Right ventricle myocardium superior (tissue), 1 donor: ENCODE measurements at regions of chr13 and their contacts with region 1.

Region 1: DNA sequence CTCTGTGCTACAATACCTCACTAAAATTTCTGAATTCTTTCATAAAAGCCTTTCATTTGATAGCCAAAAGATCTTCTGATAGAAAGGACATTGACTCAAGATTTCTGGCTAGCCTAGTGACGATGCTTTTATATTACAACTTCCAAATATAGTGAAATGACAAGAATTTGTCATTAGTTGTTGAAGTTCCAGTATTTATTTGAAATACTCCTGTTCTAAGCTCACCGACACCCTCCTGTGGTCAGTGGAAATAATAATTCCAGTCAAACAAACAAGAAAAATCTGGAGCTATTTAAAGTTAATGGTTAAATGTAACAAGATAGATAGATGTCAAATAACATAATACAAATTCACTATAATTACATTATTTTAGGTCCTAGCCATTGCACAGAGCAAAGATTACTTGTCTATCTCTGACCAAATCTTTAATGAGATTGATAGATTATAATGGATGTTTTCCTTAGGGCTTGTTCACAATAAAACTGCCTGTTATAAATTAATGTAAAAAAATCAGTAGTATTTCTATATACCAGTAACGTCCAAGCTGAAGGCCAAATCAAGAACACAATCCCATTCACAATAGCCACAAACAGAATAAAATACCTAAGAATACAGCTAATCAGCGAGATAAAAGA is 195.5 kb downstream of the RGCC start:
- DNase-seq: no peak
- ATAC-seq: peak; percentile 33

Region 2: DNA sequence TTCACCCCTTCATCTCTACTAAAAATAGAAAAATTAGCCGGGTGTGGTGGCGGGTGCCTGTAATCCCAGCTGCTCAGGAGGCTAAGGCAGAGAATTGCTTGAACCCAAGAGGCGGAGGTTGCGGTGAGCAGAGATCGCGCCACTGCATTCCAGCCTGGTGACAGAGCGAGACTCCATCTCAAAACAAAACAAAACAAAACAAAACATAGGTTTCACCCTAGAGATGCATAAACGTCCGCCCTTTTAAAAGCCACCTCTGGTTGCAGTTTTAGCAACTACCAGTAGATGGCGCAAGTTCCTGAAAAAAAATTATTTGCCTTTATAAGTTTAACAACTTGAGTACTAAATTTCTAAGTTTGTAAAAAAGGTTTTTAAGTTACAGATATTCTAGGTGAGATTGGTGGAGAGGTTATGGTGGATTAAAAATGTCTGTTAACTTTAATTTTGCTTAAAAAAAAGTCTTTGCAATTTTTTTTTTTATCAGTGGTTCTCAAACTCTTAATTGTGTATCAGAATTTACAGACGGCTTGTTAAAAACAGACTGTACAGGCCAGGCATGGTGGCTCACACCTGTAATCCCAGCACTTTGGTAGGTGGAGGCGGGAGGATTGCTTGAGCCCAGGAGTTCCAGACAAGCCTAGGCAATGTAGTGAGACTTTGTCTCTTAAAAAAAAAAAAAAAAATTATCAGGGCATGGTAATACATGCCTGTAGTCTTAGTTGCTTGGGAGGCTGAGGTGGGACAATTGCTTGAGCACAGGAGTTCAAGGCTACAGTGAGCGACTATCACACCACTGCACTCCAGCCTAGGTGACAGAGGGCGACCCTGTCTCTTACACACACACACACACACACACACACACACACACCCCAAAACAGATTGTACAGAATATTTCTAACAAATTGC is 299.7 kb before region 1 on chr13:
- intact Hi-C with region 1: loop called (anchors 5 kb)
- DNase-seq: no peak
- ATAC-seq: peak; percentile 55

Region 3: GRCh38 chr13:41411522-41411921 is 241.3 kb before region 1 on chr13:
- intact Hi-C with region 1: loop called (anchors 5 kb)
- DNase-seq: no peak
- ATAC-seq: no peak

Region 4: DNA sequence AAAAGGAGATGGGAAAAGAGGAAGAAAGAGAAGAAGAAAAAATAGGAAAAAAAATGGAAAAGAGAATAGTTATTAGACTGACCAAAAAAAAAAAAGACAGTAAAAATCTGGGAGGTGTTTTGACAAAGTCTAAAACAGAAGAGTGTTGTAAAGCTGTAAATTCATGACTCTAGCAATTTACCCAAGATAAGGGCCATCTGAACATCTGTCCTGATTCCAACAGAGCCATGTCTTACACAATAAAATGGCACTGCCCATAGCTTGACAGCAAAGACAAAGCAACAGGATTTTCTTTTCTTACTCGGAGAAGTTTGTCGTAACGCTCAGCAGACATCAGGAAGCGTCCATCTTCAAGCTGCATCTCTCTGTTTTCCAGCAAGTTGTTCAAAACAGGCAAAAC is 238.3 kb after region 1 on chr13:
- intact Hi-C with region 1: no loop called
- DNase-seq: no peak
- ATAC-seq: no peak